ENCODE measurements at regions of chr14 and their contacts with region 1.

Region 1: DNA sequence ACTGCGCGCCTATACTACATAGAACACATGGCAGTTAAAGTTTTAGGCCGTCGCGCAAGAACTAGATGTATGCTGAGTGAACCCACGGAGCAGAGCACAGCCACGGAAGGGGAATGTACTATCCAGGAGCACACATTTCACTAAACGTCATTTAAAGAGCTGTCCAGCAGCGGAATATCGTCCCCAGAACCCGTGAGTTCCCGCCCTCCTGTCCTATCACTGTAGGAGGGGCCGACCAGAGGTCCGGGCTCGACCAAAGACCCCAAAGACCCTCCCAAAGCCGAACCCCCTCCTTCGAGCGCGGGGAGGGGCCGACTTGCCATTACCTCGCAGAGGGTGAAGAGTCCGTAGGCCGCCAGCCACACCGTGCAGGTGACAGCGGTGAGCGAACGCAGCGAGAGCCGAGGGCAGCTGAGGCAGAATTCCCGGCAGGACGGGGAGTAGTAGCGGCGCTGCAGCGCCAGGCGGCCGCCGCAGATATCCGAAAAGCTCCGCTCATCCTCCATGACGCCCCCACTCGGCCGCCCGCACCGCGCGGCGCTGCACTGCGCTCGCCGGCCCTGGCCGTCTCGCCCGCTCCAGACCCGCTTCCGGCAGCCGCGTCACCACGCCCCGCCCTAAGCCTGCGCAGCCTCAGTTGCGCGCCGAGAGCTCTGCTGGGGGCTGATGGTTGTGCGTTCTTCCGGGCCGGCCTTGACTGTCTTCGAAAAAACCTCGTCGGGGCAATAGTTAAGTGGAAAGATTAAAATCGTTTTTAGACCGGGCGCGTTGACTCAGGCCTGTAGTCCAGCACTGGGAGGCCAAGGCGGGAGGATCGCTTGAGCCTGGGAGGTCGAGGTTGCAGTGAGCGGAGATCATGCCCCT is at the start of gene PIGH:
- DNase-seq: peak; percentile 95
- ATAC-seq: peak; percentile 90
- H3K4me3 ChIP-seq: peak within 1 kb of the TSS; percentile 78 to 97 (median 94)
- H3K4me3 Mint-ChIP-seq: peak within 1 kb of the TSS; percentile 90
- H3K27ac ChIP-seq: peak within 1 kb of the TSS; percentile 84 to 85
- H3K27ac Mint-ChIP-seq: peak within 1 kb of the TSS; percentile 98
- H3K4me1 ChIP-seq: peaks cover 44 to 49% of the 10 kb centered on the region in 2 donors
- H3K4me1 Mint-ChIP-seq: peaks cover 61% of the 10 kb centered on the region
- H3K27me3 ChIP-seq: no peaks in the 10 kb centered on the region
- H3K27me3 Mint-ChIP-seq: no peaks in the 10 kb centered on the region
- CTCF ChIP-seq: peak; percentile 82
- total RNA-seq, gene PIGH: 26.7 and 30.4 TPM in 2 replicates

Region 2: GRCh38 chr14:67359775-67360648 is 239.9 kb before region 1 on chr14 and contains the starts of genes ATP6V1D and EIF2S1:
- CTCF ChIA-PET with region 1: interaction called, 5 read pairs
- POLR2A ChIA-PET with region 1: interaction called, 4 read pairs
- intact Hi-C with region 1: loop called (anchors 1 kb)
- DNase-seq: peak; percentile 100
- ATAC-seq: peak; percentile 90
- H3K4me3 ChIP-seq: peak within 1 kb of the TSS; percentile 79 to 97 (median 93)
- H3K4me3 Mint-ChIP-seq: peak within 1 kb of the TSS; percentile 100
- H3K27ac ChIP-seq: peak within 1 kb of the TSS; percentile 92 to 95
- H3K27ac Mint-ChIP-seq: peak within 1 kb of the TSS; percentile 100
- H3K4me1 ChIP-seq: peaks cover 26% of the 10 kb centered on the region in 2 donors
- H3K4me1 Mint-ChIP-seq: peaks cover 50% of the 10 kb centered on the region
- H3K27me3 ChIP-seq: no peaks in the 10 kb centered on the region
- H3K27me3 Mint-ChIP-seq: no peaks in the 10 kb centered on the region
- CTCF ChIP-seq: peak; percentile 100
- total RNA-seq, gene ATP6V1D: 35.3 and 35.6 TPM in 2 replicates
- total RNA-seq, gene EIF2S1: 39.3 and 39.9 TPM in 2 replicates

Region 3: GRCh38 chr14:67583711-67584644 is 16.0 kb before region 1 on chr14:
- CTCF ChIA-PET with region 1: interaction called, 49 read pairs
- POLR2A ChIA-PET with region 1: no interaction called
- intact Hi-C with region 1: loop called (anchors 2 kb)
- DNase-seq: peak; percentile 76
- ATAC-seq: peak; percentile 80
- H3K4me3 ChIP-seq: no peak overlapping the region
- H3K4me3 Mint-ChIP-seq: no peak overlapping the region
- H3K27ac ChIP-seq: no peak overlapping the region
- H3K27ac Mint-ChIP-seq: no peak overlapping the region
- H3K4me1 ChIP-seq: no peaks in the 10 kb centered on the region
- H3K4me1 Mint-ChIP-seq: peaks cover 6% of the 10 kb centered on the region
- H3K27me3 ChIP-seq: no peaks in the 10 kb centered on the region
- H3K27me3 Mint-ChIP-seq: no peaks in the 10 kb centered on the region
- CTCF ChIP-seq: peak; percentile 85

Region 4: GRCh38 chr14:67636361-67636919 is 36.5 kb after region 1 on chr14:
- CTCF ChIA-PET with region 1: no interaction called
- POLR2A ChIA-PET with region 1: no interaction called
- intact Hi-C with region 1: loop called (anchors 5 kb)
- DNase-seq: no peak
- ATAC-seq: no peak
- H3K4me3 ChIP-seq: no peak overlapping the region
- H3K4me3 Mint-ChIP-seq: no peak overlapping the region
- H3K27ac ChIP-seq: no peak overlapping the region
- H3K27ac Mint-ChIP-seq: no peak overlapping the region
- H3K4me1 ChIP-seq: no peaks in the 10 kb centered on the region
- H3K4me1 Mint-ChIP-seq: no peaks in the 10 kb centered on the region
- H3K27me3 ChIP-seq: no peaks in the 10 kb centered on the region
- H3K27me3 Mint-ChIP-seq: no peaks in the 10 kb centered on the region
- CTCF ChIP-seq: no peak

Region 5: DNA sequence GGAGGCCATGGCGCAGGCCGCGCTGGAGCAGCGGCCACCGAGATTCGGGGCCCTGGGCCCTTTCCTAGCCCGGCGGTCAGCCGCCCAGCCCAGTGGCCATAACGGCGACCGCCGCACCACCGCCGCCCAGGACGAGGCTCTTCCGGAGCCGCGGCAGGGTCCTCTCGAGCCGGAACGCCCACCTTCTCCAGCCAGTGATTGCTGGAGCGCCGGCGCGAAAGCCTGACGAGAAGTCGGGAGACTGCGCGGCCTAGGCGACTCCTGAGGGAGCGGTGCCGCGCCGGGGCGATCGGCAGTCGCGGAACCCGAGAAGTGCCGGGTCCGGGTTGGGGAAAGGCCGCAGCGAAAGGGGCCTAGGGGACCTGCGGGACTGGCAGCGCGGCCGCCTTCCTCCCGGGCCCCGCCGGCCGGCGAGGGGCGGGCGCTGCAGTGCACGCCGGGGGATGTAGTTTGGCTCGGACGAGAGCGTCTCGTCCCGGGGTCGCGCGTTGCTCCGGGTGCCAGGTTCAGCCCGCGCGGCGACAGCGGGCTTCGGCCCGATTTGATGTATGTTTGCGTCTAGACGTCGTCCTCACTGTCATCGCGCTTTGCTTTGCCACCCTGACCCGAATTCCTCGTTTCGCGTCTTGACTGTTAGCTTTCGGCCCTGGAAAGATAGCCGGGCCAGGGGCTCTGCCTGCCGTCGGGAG is 74.7 kb after region 1 on chr14 and contains the start of gene VTI1B:
- CTCF ChIA-PET with region 1: interaction called, 39 read pairs
- POLR2A ChIA-PET with region 1: interaction called, 7 read pairs
- intact Hi-C with region 1: loop called (anchors 1 kb)
- DNase-seq: peak; percentile 94
- ATAC-seq: peak; percentile 92
- H3K4me3 ChIP-seq: peak within 1 kb of the TSS; percentile 71 to 97 (median 87)
- H3K4me3 Mint-ChIP-seq: peak within 1 kb of the TSS; percentile 86
- H3K27ac ChIP-seq: peak within 1 kb of the TSS; percentile 96 to 99
- H3K27ac Mint-ChIP-seq: peak within 1 kb of the TSS; percentile 95
- H3K4me1 ChIP-seq: peaks cover 19 to 22% of the 10 kb centered on the region in 2 donors
- H3K4me1 Mint-ChIP-seq: peaks cover 30% of the 10 kb centered on the region
- H3K27me3 ChIP-seq: no peaks in the 10 kb centered on the region
- H3K27me3 Mint-ChIP-seq: no peaks in the 10 kb centered on the region
- CTCF ChIP-seq: no peak
- total RNA-seq, gene VTI1B: 58.8 and 58.9 TPM in 2 replicates

Region 6: GRCh38 chr14:67704484-67705089 is 104.7 kb after region 1 on chr14:
- CTCF ChIA-PET with region 1: interaction called, 23 read pairs
- POLR2A ChIA-PET with region 1: no interaction called
- intact Hi-C with region 1: no loop called
- DNase-seq: peak; percentile 77
- ATAC-seq: peak; percentile 78
- H3K4me3 ChIP-seq: no peak overlapping the region
- H3K4me3 Mint-ChIP-seq: no peak overlapping the region
- H3K27ac ChIP-seq: no peak overlapping the region
- H3K27ac Mint-ChIP-seq: no peak overlapping the region
- H3K4me1 ChIP-seq: peaks cover 2% of the 10 kb centered on the region in 2 donors
- H3K4me1 Mint-ChIP-seq: peaks cover 4% of the 10 kb centered on the region
- H3K27me3 ChIP-seq: no peaks in the 10 kb centered on the region
- H3K27me3 Mint-ChIP-seq: peaks cover 8% of the 10 kb centered on the region
- CTCF ChIP-seq: peak; percentile 72

Region 7: GRCh38 chr14:69398053-69398817 is 1798.3 kb after region 1 on chr14 and contains the starts of genes ERH and SLC39A9:
- CTCF ChIA-PET with region 1: no interaction called
- POLR2A ChIA-PET with region 1: no interaction called
- intact Hi-C with region 1: loop called (anchors 5 kb)
- DNase-seq: peak; percentile 98
- ATAC-seq: peak; percentile 83
- H3K4me3 ChIP-seq: peak within 1 kb of the TSS; percentile 82 to 99 (median 94)
- H3K4me3 Mint-ChIP-seq: peak within 1 kb of the TSS; percentile 95
- H3K27ac ChIP-seq: peak within 1 kb of the TSS; percentile 90 to 99
- H3K27ac Mint-ChIP-seq: peak within 1 kb of the TSS; percentile 98
- H3K4me1 ChIP-seq: peaks cover 41 to 47% of the 10 kb centered on the region in 2 donors
- H3K4me1 Mint-ChIP-seq: peaks cover 57% of the 10 kb centered on the region
- H3K27me3 ChIP-seq: no peaks in the 10 kb centered on the region
- H3K27me3 Mint-ChIP-seq: no peaks in the 10 kb centered on the region
- CTCF ChIP-seq: no peak
- total RNA-seq, gene ERH: 156 and 169 TPM in 2 replicates
- total RNA-seq, gene SLC39A9: 59.1 and 66.2 TPM in 2 replicates